CD8-positive, alpha-beta memory T cell (primary cell): ENCODE measurements at regions of chr5 and their contacts with region 1.

Region 1: DNA sequence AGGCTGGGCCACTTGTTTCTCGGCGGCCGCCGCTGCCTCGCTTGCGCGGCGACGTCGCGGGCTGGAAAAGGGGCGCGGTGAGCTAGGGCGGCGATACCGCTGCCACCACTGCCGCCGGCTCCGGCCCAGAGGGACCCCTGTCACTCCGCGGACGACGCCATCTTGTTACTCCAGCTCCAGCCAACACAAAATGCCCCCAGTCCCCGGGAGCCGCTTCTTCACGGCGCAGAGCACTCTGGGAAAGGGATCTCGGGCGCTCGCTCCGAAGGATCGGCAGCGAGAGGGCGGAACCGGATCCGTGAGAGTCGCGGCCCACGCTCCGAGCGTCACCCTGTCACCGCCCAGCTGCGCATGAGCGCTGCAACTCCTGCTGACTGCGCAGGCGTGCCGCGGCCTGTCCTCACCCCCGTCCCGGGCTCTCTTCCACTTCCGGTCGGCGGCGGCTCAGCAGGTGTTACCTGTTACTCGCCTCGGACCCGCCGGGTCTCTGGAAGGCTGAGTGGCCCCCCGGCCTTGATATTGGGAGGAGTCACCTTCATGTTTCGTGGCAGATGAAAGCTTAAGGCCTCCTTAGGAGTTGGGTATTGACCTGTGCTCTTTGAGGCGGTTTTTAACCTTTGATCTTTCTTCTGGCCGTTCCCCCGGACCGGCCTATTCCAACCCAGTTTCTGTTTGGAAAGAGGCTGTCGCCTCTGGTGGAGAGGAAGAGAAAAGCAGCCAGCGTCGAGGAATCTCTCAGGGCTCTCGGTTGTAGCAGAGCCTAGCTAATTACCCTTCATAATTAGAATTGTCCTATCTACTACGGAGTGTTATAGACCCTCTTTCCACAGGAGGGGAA is at the start of gene CSNK1A1:
- DNase-seq: peak; percentile 98 to 99 (median 99)
- H3K4me3 ChIP-seq: peak within 1 kb of the TSS; percentile 95
- H3K4me3 Mint-ChIP-seq: peak within 1 kb of the TSS; percentile 95 to 99 (median 99)
- H3K27ac ChIP-seq: peak within 1 kb of the TSS; percentile 93
- H3K27ac Mint-ChIP-seq: peak within 1 kb of the TSS; percentile 95 to 100 (median 99)
- H3K4me1 ChIP-seq: peaks cover 28% of the 10 kb centered on the region
- H3K4me1 Mint-ChIP-seq: peaks cover 31 to 42% (median 38%) of the 10 kb centered on the region in 3 donors
- H3K27me3 ChIP-seq: no peaks in the 10 kb centered on the region
- H3K27me3 Mint-ChIP-seq: peaks cover 0 to 2% of the 10 kb centered on the region in 2 donors
- total RNA-seq, gene CSNK1A1: 177 to 187 TPM

Region 2: GRCh38 chr5:149357370-149358293 is 193.8 kb before region 1 on chr5 and contains the start of gene PCYOX1L:
- CTCF ChIA-PET with region 1: interaction called, 5 read pairs
- POLR2A ChIA-PET with region 1: interaction called, 10 read pairs
- DNase-seq: peak; percentile 88 to 96 (median 93)
- H3K4me3 ChIP-seq: peak within 1 kb of the TSS; percentile 81
- H3K4me3 Mint-ChIP-seq: peak within 1 kb of the TSS; percentile 89 to 97 (median 92)
- H3K27ac ChIP-seq: peak within 1 kb of the TSS; percentile 66
- H3K27ac Mint-ChIP-seq: peak within 1 kb of the TSS; percentile 75 to 96 (median 90)
- H3K4me1 ChIP-seq: peaks cover 47% of the 10 kb centered on the region
- H3K4me1 Mint-ChIP-seq: peaks cover 47 to 67% (median 66%) of the 10 kb centered on the region in 3 donors
- H3K27me3 ChIP-seq: no peaks in the 10 kb centered on the region
- H3K27me3 Mint-ChIP-seq: peaks cover 0 to 2% of the 10 kb centered on the region in 2 donors
- total RNA-seq, gene PCYOX1L: 22.6 to 23.3 TPM

Region 3: DNA sequence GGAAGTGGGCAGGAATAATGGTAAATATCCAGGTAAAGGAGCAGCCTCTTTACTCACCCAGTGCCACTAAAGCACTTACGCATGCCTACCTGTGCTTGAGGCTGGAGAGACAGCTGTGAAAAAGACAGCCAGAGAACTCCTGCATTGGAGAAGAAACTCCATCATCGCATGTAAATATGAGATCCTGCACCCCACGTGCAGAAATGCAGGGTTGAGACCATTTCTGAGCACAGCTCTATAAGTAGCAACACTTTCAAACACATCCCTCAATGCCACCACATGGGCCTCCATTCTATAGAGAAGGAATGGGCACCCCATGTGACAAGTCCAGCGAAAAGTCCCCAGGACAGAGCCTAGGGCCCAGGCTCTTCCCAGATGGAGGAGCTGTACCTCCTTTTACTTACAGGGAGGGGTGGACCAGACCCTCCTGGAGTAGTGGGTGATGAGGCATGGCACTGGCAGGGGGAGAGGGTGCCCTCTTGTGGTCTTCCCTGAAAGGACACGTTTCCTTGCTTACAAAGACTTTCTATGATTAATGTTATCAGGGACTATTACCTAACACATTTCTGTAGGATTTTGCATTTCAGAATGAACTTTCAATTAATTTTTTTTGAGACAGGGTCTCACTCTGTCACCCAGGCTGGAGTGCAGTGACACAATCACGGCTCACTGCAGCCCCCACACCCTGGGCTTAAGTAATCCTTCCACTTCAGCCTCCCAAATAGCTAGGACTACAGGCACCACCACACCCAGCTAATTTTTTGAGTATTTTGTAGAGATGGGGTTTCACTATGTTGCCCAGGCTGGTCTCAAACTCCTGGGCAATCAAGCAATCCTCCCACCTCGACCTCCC is 117.0 kb before region 1 on chr5:
- CTCF ChIA-PET with region 1: interaction called, 11 read pairs
- POLR2A ChIA-PET with region 1: no interaction called
- DNase-seq: peak in 4 of 5 donors; percentile 11 to 49 (median 24)
- H3K4me3 ChIP-seq: no peak overlapping the region
- H3K4me3 Mint-ChIP-seq: no peak overlapping the region
- H3K27ac ChIP-seq: no peak overlapping the region
- H3K27ac Mint-ChIP-seq: no peak overlapping the region
- H3K4me1 ChIP-seq: no peaks in the 10 kb centered on the region
- H3K4me1 Mint-ChIP-seq: no peaks in the 10 kb centered on the region
- H3K27me3 ChIP-seq: no peaks in the 10 kb centered on the region
- H3K27me3 Mint-ChIP-seq: peaks cover 0 to 10% of the 10 kb centered on the region in 2 donors

Region 4: GRCh38 chr5:149526845-149527580 is 24.4 kb before region 1 on chr5:
- CTCF ChIA-PET with region 1: no interaction called
- POLR2A ChIA-PET with region 1: no interaction called
- DNase-seq: no peak
- H3K4me3 ChIP-seq: no peak overlapping the region
- H3K4me3 Mint-ChIP-seq: peak overlapping the region in 5 of 7 donors; percentile 15 to 49 (median 23)
- H3K27ac ChIP-seq: no peak overlapping the region
- H3K27ac Mint-ChIP-seq: peak overlapping the region in 7 of 8 donors; percentile 7 to 77 (median 40)
- H3K4me1 ChIP-seq: peaks cover 85% of the 10 kb centered on the region
- H3K4me1 Mint-ChIP-seq: peaks cover 77 to 99% (median 91%) of the 10 kb centered on the region in 3 donors
- H3K27me3 ChIP-seq: no peaks in the 10 kb centered on the region
- H3K27me3 Mint-ChIP-seq: no peaks in the 10 kb centered on the region

Region 5: GRCh38 chr5:149540089-149540488 is 11.3 kb before region 1 on chr5:
- CTCF ChIA-PET with region 1: interaction called, 13 read pairs
- POLR2A ChIA-PET with region 1: no interaction called
- DNase-seq: no peak
- H3K4me3 ChIP-seq: no peak overlapping the region
- H3K4me3 Mint-ChIP-seq: peak overlapping the region in 6 of 7 donors; percentile 3 to 74 (median 54)
- H3K27ac ChIP-seq: no peak overlapping the region
- H3K27ac Mint-ChIP-seq: peak overlapping the region in 7 of 8 donors; percentile 9 to 79 (median 55)
- H3K4me1 ChIP-seq: peaks cover 62% of the 10 kb centered on the region
- H3K4me1 Mint-ChIP-seq: peaks cover 62 to 85% (median 78%) of the 10 kb centered on the region in 3 donors
- H3K27me3 ChIP-seq: no peaks in the 10 kb centered on the region
- H3K27me3 Mint-ChIP-seq: no peaks in the 10 kb centered on the region